Naive thymus-derived CD4-positive, alpha-beta T cell (primary cell): ENCODE measurements at regions of chrX and their contacts with region 1.

Region 1: GRCh38 chrX:3713225-3713936 is at the start of gene PRKX:
- DNase-seq: peak; percentile 59 to 85 (median 78)
- ATAC-seq: peak; percentile 94
- H3K4me3 ChIP-seq: peak within 1 kb of the TSS; percentile 67
- H3K4me3 Mint-ChIP-seq: peak within 1 kb of the TSS; percentile 91 to 99 (median 96)
- H3K27ac ChIP-seq: peak within 1 kb of the TSS; percentile 71
- H3K27ac Mint-ChIP-seq: peak within 1 kb of the TSS; percentile 64 to 97 (median 90)
- H3K4me1 ChIP-seq: peaks cover 7 to 15% of the 10 kb centered on the region in 2 donors
- H3K4me1 Mint-ChIP-seq: peaks cover 0 to 44% (median 17%) of the 10 kb centered on the region in 7 donors
- H3K27me3 ChIP-seq: no peaks in the 10 kb centered on the region
- H3K27me3 Mint-ChIP-seq: no peaks in the 10 kb centered on the region
- total RNA-seq, gene PRKX: 43.9 to 118 (median 55.2) TPM

Region 2: GRCh38 chrX:3651276-3651675 is 62.1 kb before region 1 on chrX:
- CTCF ChIA-PET with region 1: no interaction called
- POLR2A ChIA-PET with region 1: no interaction called
- intact Hi-C with region 1: loop called (anchors 2 to 5 kb)
- DNase-seq: peak in 6 of 9 donors; percentile 3 to 39 (median 29)
- ATAC-seq: peak; percentile 53
- H3K4me3 ChIP-seq: no peak overlapping the region
- H3K4me3 Mint-ChIP-seq: no peak overlapping the region
- H3K27ac ChIP-seq: no peak overlapping the region
- H3K27ac Mint-ChIP-seq: peak overlapping the region in 1 of 9 donors; percentile 61
- H3K4me1 ChIP-seq: no peaks in the 10 kb centered on the region
- H3K4me1 Mint-ChIP-seq: peaks cover 0 to 6% (median 1%) of the 10 kb centered on the region in 7 donors
- H3K27me3 ChIP-seq: no peaks in the 10 kb centered on the region
- H3K27me3 Mint-ChIP-seq: no peaks in the 10 kb centered on the region

Region 3: DNA sequence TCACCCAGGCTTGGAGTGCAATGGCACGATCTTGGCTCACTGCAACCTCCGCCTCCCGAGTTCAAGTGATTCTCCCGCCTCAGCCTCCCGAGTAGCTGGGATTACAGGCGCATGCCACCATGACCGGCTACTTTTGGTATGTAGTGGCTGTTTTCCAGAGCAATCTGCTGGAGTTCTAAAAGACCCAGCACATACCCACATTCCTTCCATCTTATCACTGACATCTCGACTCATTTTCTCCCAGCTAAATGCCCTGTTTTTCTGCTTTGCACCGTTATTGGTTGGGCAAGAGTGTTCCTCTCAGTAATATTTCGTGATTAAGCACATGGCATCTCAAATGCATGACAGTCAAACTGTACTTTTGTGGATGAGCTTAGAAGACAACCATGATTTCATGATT is 53.6 kb before region 1 on chrX:
- CTCF ChIA-PET with region 1: no interaction called
- POLR2A ChIA-PET with region 1: no interaction called
- intact Hi-C with region 1: loop called in 1 of 2 experiments (anchors 5 kb)
- DNase-seq: no peak
- ATAC-seq: no peak
- H3K4me3 ChIP-seq: no peak overlapping the region
- H3K4me3 Mint-ChIP-seq: no peak overlapping the region
- H3K27ac ChIP-seq: no peak overlapping the region
- H3K27ac Mint-ChIP-seq: peak overlapping the region in 2 of 9 donors; percentile 18 to 63
- H3K4me1 ChIP-seq: no peaks in the 10 kb centered on the region
- H3K4me1 Mint-ChIP-seq: peaks cover 0 to 28% (median 7%) of the 10 kb centered on the region in 7 donors
- H3K27me3 ChIP-seq: no peaks in the 10 kb centered on the region
- H3K27me3 Mint-ChIP-seq: no peaks in the 10 kb centered on the region

Region 4: GRCh38 chrX:3697701-3698279 is 15.6 kb before region 1 on chrX:
- CTCF ChIA-PET with region 1: interaction called, 6 read pairs
- POLR2A ChIA-PET with region 1: interaction called, 13 read pairs
- intact Hi-C with region 1: loop called in 1 of 2 experiments (anchors 2 kb)
- DNase-seq: no peak
- ATAC-seq: no peak
- H3K4me3 ChIP-seq: no peak overlapping the region
- H3K4me3 Mint-ChIP-seq: peak overlapping the region in 3 of 10 donors; percentile 28 to 51 (median 38)
- H3K27ac ChIP-seq: no peak overlapping the region
- H3K27ac Mint-ChIP-seq: peak overlapping the region in 6 of 9 donors; percentile 21 to 78 (median 36)
- H3K4me1 ChIP-seq: peaks cover 0 to 4% of the 10 kb centered on the region in 2 donors
- H3K4me1 Mint-ChIP-seq: peaks cover 28 to 80% (median 56%) of the 10 kb centered on the region in 7 donors
- H3K27me3 ChIP-seq: no peaks in the 10 kb centered on the region
- H3K27me3 Mint-ChIP-seq: no peaks in the 10 kb centered on the region

Region 5: DNA sequence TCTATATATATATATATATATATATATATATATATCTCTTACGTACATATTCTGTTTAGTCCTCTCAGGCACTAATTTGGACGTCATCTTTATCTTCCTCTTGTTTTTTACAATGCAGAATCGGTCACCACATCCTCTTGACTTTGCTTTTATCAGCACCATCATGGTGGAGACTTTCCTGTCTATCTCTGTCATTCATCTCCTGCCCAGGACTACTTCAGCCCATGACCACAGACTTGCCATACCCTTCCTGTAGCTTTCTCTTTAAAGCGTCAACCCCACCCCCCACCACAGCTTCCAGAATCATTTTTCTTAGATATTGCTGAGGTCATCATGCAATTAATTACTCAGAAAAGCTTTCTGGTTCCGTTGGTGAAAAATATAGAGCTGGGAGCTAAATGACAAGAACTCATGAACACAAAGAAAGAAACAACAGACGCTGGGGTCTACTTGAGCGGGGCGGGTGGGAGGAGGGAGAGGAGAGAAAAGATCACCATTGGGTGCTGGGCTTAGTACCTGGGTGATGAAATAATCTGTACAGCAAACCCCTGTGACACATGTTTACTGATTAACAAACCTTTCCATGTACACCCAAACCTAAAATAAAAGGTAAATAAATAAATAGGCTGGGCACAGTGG is 30.5 kb after region 1 on chrX:
- CTCF ChIA-PET with region 1: no interaction called
- POLR2A ChIA-PET with region 1: interaction called, 4 read pairs
- intact Hi-C with region 1: loop called (anchors 1 to 2 kb)
- DNase-seq: peak in 7 of 9 donors; percentile 34 to 80 (median 50)
- ATAC-seq: peak; percentile 96
- H3K4me3 ChIP-seq: no peak overlapping the region
- H3K4me3 Mint-ChIP-seq: peak overlapping the region; percentile 27 to 80 (median 72)
- H3K27ac ChIP-seq: no peak overlapping the region
- H3K27ac Mint-ChIP-seq: peak overlapping the region in 8 of 9 donors; percentile 0 to 86 (median 73)
- H3K4me1 ChIP-seq: peaks cover 10 to 23% of the 10 kb centered on the region in 2 donors
- H3K4me1 Mint-ChIP-seq: peaks cover 17 to 51% (median 38%) of the 10 kb centered on the region in 7 donors
- H3K27me3 ChIP-seq: no peaks in the 10 kb centered on the region
- H3K27me3 Mint-ChIP-seq: no peaks in the 10 kb centered on the region

Region 6: DNA sequence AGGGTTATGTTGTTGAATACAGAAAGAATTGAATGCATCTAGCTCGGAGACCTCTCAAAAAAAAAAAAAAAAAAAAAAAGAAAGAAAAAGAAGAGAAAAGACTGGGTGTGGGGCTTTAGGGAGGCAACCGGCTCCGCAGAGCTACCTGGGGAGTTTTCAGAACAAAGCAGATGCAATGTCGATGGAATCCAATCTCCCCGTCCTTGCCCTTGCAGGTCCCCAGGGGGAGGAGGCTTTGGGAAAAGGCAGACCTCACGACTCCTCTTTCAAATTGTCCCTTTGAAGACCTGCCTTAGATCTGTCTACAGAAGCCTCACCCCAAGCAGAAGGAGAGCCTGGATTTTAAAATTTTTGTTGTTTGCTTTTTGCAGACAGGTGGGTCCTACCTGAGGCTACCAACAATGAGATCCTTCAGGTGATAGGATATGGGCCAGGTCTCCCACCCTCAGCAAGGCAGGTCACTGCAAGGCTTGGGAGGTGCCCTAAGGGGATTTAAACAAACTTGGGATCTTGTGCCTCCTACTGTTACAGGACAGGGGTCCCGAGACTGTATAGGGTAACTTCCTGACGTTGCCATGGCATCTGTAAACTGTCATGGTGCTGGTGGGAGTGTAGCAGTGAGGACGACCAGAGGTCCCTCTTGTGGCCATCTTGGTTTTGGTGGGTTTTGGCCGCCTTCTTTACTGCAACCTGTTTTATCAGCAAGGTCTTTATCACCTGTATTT is 75.3 kb after region 1 on chrX:
- CTCF ChIA-PET with region 1: no interaction called
- POLR2A ChIA-PET with region 1: no interaction called
- intact Hi-C with region 1: loop called in 1 of 2 experiments (anchors 5 kb)
- DNase-seq: peak in 4 of 9 donors; percentile 3 to 21 (median 12)
- ATAC-seq: no peak
- H3K4me3 ChIP-seq: no peak overlapping the region
- H3K4me3 Mint-ChIP-seq: peak overlapping the region in 2 of 10 donors; percentile 8 to 22
- H3K27ac ChIP-seq: no peak overlapping the region
- H3K27ac Mint-ChIP-seq: peak overlapping the region in 1 of 9 donors; percentile 36
- H3K4me1 ChIP-seq: no peaks in the 10 kb centered on the region
- H3K4me1 Mint-ChIP-seq: peaks cover 0 to 16% (median 6%) of the 10 kb centered on the region in 7 donors
- H3K27me3 ChIP-seq: no peaks in the 10 kb centered on the region
- H3K27me3 Mint-ChIP-seq: peaks cover 0 to 20% (median 3%) of the 10 kb centered on the region in 5 donors

Region 7: GRCh38 chrX:3811331-3812311 is 98.2 kb after region 1 on chrX:
- CTCF ChIA-PET with region 1: no interaction called
- POLR2A ChIA-PET with region 1: interaction called, 3 read pairs
- intact Hi-C with region 1: loop called (anchors 1 kb)
- DNase-seq: peak in 7 of 9 donors; percentile 35 to 71 (median 59)
- ATAC-seq: no peak
- H3K4me3 ChIP-seq: peak overlapping the region; percentile 34
- H3K4me3 Mint-ChIP-seq: peak overlapping the region in 9 of 10 donors; percentile 35 to 83 (median 57)
- H3K27ac ChIP-seq: no peak overlapping the region
- H3K27ac Mint-ChIP-seq: peak overlapping the region in 5 of 9 donors; percentile 4 to 79 (median 71)
- H3K4me1 ChIP-seq: no peaks in the 10 kb centered on the region
- H3K4me1 Mint-ChIP-seq: peaks cover 0 to 30% (median 9%) of the 10 kb centered on the region in 7 donors
- H3K27me3 ChIP-seq: no peaks in the 10 kb centered on the region
- H3K27me3 Mint-ChIP-seq: peaks cover 5 to 29% (median 10%) of the 10 kb centered on the region in 5 donors

Region 8: DNA sequence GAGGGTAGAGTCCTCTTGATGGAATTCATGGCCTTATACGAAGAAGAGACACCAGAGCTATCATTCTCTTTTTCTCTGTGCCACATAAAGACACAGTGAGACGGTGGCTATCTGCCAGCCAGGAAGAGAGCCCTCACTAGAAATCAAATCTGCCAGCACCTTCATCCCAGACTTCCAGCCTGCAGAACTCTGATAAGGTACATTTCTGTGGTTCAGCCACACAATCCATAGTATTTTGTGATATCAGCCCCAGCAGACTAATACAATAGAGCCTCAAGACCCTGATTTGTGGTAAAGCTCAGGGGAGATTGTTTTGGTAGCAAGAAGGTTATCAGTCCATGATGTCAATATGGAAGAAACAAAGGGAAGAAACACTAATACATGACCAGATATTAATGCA is 1302.1 kb after region 1 on chrX:
- CTCF ChIA-PET with region 1: no interaction called
- POLR2A ChIA-PET with region 1: no interaction called
- intact Hi-C with region 1: no loop called
- DNase-seq: no peak
- ATAC-seq: no peak
- H3K4me3 ChIP-seq: no peak overlapping the region
- H3K4me3 Mint-ChIP-seq: no peak overlapping the region
- H3K27ac ChIP-seq: no peak overlapping the region
- H3K27ac Mint-ChIP-seq: no peak overlapping the region
- H3K4me1 ChIP-seq: no peaks in the 10 kb centered on the region
- H3K4me1 Mint-ChIP-seq: peaks cover 0 to 1% (median 0%) of the 10 kb centered on the region in 7 donors
- H3K27me3 ChIP-seq: no peaks in the 10 kb centered on the region
- H3K27me3 Mint-ChIP-seq: no peaks in the 10 kb centered on the region